ENCODE measurements at regions of chr14 and their contacts with region 1.

Region 1: GRCh38 chr14:50778721-50779483 is 52.1 kb downstream of the NIN start:
- DNase-seq: no peak
- ATAC-seq: no peak
- H3K4me3 ChIP-seq: no peak overlapping the region
- H3K4me3 Mint-ChIP-seq: no peak overlapping the region
- H3K27ac ChIP-seq: no peak overlapping the region
- H3K27ac Mint-ChIP-seq: peak overlapping the region; percentile 62
- H3K4me1 ChIP-seq: peaks cover 18 to 20% of the 10 kb centered on the region in 2 donors
- H3K4me1 Mint-ChIP-seq: peaks cover 24% of the 10 kb centered on the region
- H3K27me3 ChIP-seq: no peaks in the 10 kb centered on the region
- H3K27me3 Mint-ChIP-seq: no peaks in the 10 kb centered on the region
- CTCF ChIP-seq: no peak

Region 2: DNA sequence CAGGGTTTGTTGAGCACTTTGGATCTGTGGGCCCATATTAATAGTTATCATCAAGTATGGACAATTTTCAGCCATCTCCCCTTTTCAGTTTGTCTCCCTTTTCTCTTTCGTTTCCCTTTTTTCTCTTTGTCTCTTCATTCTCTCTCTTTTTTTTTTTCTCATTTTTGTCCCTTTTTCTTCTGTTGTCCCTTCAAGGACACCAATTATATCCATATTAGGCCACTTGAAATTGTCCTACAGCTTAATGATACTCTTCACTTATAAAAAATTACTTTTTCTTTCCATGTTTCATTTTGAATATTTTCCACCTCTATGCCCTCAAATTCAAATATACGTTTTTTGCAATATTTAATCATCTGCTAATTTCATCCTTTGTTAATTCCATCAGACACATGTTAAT is 299.9 kb before region 1 on chr14:
- CTCF ChIA-PET with region 1: no interaction called
- POLR2A ChIA-PET with region 1: no interaction called
- intact Hi-C with region 1: no loop called
- DNase-seq: no peak
- ATAC-seq: no peak
- H3K4me3 ChIP-seq: no peak overlapping the region
- H3K4me3 Mint-ChIP-seq: no peak overlapping the region
- H3K27ac ChIP-seq: no peak overlapping the region
- H3K27ac Mint-ChIP-seq: no peak overlapping the region
- H3K4me1 ChIP-seq: no peaks in the 10 kb centered on the region
- H3K4me1 Mint-ChIP-seq: no peaks in the 10 kb centered on the region
- H3K27me3 ChIP-seq: no peaks in the 10 kb centered on the region
- H3K27me3 Mint-ChIP-seq: no peaks in the 10 kb centered on the region
- CTCF ChIP-seq: no peak

Region 3: DNA sequence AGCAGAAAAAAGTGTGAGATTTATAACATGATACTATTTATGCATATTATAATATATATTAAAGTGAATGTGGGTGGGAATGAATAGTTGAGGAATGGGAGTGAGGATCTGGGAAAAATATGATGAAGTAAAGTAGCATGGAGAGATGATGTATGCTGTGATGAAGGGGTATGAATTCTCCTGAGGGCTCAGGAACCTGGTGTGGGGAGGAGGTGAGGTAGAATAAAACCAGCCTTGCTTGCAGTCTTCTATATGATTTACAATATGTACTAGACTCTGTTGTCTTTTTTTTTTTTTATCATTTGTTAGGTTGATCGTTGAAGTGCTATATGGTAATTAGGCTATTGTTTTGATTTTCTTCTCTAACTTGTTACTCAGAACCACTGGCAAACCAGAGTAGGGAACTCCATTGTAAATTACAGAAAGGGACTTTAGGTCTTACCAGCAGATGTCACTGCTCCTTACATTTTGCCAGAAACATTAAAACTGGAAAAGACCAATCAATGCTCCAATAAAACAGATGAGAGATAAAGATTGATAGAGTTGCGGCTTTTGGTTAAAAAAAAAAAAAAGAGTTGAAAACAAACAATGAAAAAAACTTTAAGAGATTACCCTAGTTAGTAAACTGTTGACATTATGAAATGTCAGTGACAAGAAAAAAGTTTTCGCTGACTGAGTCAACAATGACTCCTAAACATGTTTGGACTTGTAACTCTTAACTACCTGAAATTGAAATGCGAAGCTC is 179.0 kb before region 1 on chr14:
- CTCF ChIA-PET with region 1: interaction called, 54 read pairs
- POLR2A ChIA-PET with region 1: no interaction called
- intact Hi-C with region 1: loop called (anchors 1 kb)
- DNase-seq: peak; percentile 46
- ATAC-seq: no peak
- H3K4me3 ChIP-seq: no peak overlapping the region
- H3K4me3 Mint-ChIP-seq: no peak overlapping the region
- H3K27ac ChIP-seq: no peak overlapping the region
- H3K27ac Mint-ChIP-seq: no peak overlapping the region
- H3K4me1 ChIP-seq: no peaks in the 10 kb centered on the region
- H3K4me1 Mint-ChIP-seq: no peaks in the 10 kb centered on the region
- H3K27me3 ChIP-seq: no peaks in the 10 kb centered on the region
- H3K27me3 Mint-ChIP-seq: no peaks in the 10 kb centered on the region
- CTCF ChIP-seq: peak; percentile 50

Region 4: GRCh38 chr14:50756300-50756699 is 22.6 kb before region 1 on chr14:
- CTCF ChIA-PET with region 1: interaction called, 37 read pairs
- POLR2A ChIA-PET with region 1: no interaction called
- intact Hi-C with region 1: loop called (anchors 2 kb)
- DNase-seq: peak; percentile 95
- ATAC-seq: peak; percentile 93
- H3K4me3 ChIP-seq: no peak overlapping the region
- H3K4me3 Mint-ChIP-seq: no peak overlapping the region
- H3K27ac ChIP-seq: peak overlapping the region; percentile 92 to 93
- H3K27ac Mint-ChIP-seq: no peak overlapping the region
- H3K4me1 ChIP-seq: peaks cover 15 to 21% of the 10 kb centered on the region in 2 donors
- H3K4me1 Mint-ChIP-seq: peaks cover 4% of the 10 kb centered on the region
- H3K27me3 ChIP-seq: no peaks in the 10 kb centered on the region
- H3K27me3 Mint-ChIP-seq: no peaks in the 10 kb centered on the region
- CTCF ChIP-seq: no peak

Region 5: DNA sequence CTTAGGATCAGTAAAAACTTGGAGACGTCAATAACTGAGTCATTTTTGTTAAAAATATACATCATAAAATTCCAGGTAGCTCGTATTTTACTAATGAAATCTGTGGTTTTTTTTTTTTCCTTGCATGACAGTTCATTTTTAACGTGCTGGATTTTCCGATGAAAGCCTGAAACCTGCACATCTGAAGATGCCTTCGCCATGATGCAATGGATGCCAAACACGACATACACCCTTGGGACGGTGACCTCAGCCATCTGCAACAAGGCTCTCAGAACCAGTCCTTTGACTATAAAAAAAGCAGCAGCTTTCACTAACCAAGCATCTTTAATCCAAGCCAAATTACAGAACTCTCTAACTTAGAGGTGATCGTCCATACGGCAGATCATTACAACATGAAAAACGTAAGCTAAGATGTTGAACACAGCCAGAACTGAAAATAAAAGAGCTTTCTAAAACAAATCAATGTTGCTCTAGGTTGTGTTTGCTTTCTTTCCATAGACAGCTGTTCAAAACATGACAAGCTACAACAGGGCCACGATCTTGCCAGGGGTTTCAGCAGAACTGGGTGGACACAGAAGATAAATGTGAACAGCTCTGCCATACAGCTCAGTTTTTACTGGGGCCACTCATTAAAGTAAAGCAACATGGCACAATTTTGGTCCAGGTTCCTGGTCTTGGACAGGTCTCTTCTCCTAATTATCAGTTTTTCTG is 44.3 kb after region 1 on chr14:
- CTCF ChIA-PET with region 1: interaction called, 30 read pairs
- POLR2A ChIA-PET with region 1: interaction called, 3 read pairs
- intact Hi-C with region 1: no loop called
- DNase-seq: peak; percentile 52
- ATAC-seq: peak; percentile 41
- H3K4me3 ChIP-seq: peak overlapping the region; percentile 23 to 60 (median 42)
- H3K4me3 Mint-ChIP-seq: peak overlapping the region; percentile 85
- H3K27ac ChIP-seq: peak overlapping the region; percentile 71 to 92
- H3K27ac Mint-ChIP-seq: peak overlapping the region; percentile 92
- H3K4me1 ChIP-seq: peaks cover 78 to 86% of the 10 kb centered on the region in 2 donors
- H3K4me1 Mint-ChIP-seq: peaks cover 91% of the 10 kb centered on the region
- H3K27me3 ChIP-seq: no peaks in the 10 kb centered on the region
- H3K27me3 Mint-ChIP-seq: no peaks in the 10 kb centered on the region
- CTCF ChIP-seq: no peak

Region 6: GRCh38 chr14:50892255-50892654 is 113.4 kb after region 1 on chr14:
- CTCF ChIA-PET with region 1: no interaction called
- POLR2A ChIA-PET with region 1: no interaction called
- intact Hi-C with region 1: no loop called
- DNase-seq: no peak
- ATAC-seq: no peak
- H3K4me3 ChIP-seq: no peak overlapping the region
- H3K4me3 Mint-ChIP-seq: no peak overlapping the region
- H3K27ac ChIP-seq: no peak overlapping the region
- H3K27ac Mint-ChIP-seq: no peak overlapping the region
- H3K4me1 ChIP-seq: no peaks in the 10 kb centered on the region
- H3K4me1 Mint-ChIP-seq: no peaks in the 10 kb centered on the region
- H3K27me3 ChIP-seq: no peaks in the 10 kb centered on the region
- H3K27me3 Mint-ChIP-seq: peaks cover 11% of the 10 kb centered on the region
- CTCF ChIP-seq: no peak

Region 7: DNA sequence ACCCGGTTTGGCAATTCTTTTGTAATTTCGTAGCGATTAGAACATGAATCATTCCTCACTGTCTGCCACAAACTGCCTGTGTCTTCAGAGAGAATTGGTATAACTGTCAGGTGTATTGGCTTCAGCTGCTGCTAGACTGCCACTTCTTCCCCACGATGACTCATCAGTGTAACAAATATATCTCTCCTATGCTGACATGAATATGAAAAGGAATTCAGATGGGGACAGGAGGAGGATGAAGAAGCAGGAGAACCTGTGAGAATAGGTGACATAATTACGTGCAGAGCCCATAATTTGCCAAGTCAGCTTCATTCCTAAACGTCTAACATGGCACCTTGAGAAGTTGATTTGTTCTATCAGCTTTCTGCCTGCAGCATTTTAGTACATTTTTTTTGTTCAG is 937.7 kb after region 1 on chr14:
- CTCF ChIA-PET with region 1: no interaction called
- POLR2A ChIA-PET with region 1: no interaction called
- intact Hi-C with region 1: no loop called
- DNase-seq: no peak
- ATAC-seq: no peak
- H3K4me3 ChIP-seq: no peak overlapping the region
- H3K4me3 Mint-ChIP-seq: no peak overlapping the region
- H3K27ac ChIP-seq: no peak overlapping the region
- H3K27ac Mint-ChIP-seq: no peak overlapping the region
- H3K4me1 ChIP-seq: no peaks in the 10 kb centered on the region
- H3K4me1 Mint-ChIP-seq: no peaks in the 10 kb centered on the region
- H3K27me3 ChIP-seq: no peaks in the 10 kb centered on the region
- H3K27me3 Mint-ChIP-seq: peaks cover 5% of the 10 kb centered on the region
- CTCF ChIP-seq: no peak